Mammary epithelial cell (primary cell): ENCODE measurements at regions of chr2 and their contacts with region 1.

Region 1: DNA sequence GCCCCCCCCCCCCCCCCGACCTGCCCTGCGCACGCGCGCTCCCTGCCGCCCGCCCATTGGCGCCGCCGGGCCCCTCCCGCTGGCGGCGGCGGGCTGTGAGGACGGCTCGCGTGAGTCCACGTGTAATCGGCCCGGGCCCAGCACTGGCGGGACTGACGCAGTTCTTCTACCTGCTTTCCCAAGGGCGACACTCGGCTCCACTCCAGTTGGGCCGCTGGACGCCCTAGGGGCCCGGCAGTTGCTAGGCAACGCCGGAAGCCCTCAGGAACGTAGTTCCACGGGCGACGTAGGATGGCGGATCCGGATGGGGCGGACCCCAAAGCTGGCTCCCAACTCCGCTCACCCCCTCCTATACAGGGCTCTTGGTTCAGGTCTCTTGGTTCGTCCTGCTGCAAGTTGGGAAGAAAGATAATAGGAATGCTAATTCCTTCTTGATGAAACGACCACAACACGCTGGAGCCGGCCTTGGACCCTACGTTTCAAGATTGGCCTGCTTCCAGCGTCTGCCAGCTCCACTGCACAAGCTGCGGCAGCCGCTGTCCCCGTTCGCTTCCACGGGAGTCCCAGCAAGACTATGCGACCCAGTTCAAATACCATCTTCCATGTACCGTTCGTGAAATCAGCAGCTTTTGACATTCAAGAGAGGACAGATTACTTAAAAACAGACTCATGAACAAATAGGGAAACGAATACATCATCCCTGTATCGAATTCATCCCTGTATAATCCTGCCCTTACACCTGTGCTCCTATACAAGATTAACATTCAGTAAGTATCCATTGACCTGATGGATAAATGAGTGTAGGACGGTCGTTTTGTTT is 415 bp upstream of the MCFD2 start:
- DNase-seq: peak; percentile 87
- H3K4me3 ChIP-seq: peak overlapping the region; percentile 67 to 97 (median 74)
- H3K27ac ChIP-seq: peak overlapping the region; percentile 92
- H3K4me1 ChIP-seq: peaks cover 26% of the 10 kb centered on the region
- H3K27me3 ChIP-seq: no peaks in the 10 kb centered on the region
- CTCF ChIP-seq: no peak

Region 2: DNA sequence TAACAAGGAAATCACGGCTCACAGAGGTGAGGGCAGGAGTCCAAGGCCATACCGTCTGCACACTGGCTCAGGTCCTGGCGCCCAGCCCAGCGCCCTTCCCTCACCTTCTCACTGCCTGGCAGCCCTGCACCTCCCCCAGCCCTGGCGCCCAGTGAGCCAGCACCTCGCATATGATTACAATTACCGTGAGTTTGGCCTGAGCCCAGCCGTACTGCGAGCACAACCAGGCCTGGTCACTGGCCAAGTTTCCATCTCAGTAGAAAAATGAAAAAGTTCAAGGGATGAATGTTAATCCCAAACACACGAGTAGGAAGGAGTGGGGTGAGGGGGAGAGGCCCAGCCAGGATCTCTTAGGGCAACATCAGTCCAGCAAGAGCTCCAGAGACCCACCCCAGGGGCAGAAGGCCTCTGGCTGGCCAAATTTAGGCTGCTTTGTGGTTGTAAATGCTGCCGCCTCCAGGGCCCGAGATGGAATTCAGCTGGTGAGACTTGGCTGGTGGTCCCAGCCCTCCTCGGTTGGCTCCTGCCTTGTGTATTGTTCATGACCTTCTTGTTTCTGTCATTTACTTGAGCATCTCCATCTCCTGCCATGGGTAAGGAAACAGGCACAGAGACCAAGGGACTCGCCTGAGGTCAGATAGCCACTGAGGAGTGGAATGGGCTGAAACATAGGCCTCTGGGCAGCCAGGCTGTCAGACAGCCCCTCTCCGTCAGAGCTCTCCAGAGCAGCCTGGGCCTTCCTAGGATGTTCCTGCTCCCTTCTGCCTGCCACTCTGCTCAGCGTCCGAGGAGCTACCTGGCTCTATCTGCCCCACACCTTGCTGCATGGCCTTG is 68.6 kb before region 1 on chr2:
- CTCF ChIA-PET with region 1: no interaction called
- dilution Hi-C with region 1: no loop called
- in situ Hi-C with region 1: no loop called
- intact Hi-C with region 1: no loop called
- DNase-seq: peak; percentile 85
- H3K4me3 ChIP-seq: no peak overlapping the region
- H3K27ac ChIP-seq: peak overlapping the region; percentile 58
- H3K4me1 ChIP-seq: peaks cover 64% of the 10 kb centered on the region
- H3K27me3 ChIP-seq: no peaks in the 10 kb centered on the region
- CTCF ChIP-seq: no peak

Region 3: DNA sequence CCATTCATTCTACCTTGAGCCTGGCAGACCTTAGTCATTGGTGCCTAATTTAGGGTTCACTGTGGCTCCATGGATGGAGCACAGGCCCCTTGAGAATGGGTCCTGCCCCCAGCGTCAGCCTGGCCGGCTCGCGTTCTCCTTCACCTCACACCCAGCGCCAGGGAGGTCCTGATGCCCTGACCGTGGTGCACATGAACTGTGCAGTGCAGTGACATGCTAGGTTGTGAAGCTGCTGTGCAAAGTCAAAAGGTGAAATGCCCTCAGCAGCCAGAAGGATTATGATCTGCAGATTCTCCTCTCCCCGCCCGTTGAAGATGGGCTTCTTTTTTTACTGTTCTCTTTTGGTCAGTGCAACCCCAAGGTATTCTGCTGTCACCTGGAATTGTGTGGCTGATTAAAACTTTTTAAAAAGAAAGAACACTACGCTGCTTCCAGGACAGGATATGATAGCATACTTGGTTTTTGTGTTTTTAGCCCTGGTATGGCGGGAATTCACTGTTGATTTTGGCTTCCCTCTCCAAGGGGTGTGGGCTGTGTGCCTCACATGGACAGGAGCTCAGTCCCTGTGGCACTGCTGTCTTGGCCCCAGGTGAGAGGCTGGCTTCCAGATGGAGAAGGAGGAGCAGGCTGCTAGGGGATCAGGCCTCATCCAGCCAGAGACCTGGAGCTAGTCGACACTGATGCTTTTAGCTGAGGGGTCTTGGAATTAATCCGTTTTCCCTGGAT is 49.0 kb after region 1 on chr2:
- CTCF ChIA-PET with region 1: no interaction called
- dilution Hi-C with region 1: loop called (anchors 5 kb)
- in situ Hi-C with region 1: no loop called
- intact Hi-C with region 1: loop called (anchors 1 kb)
- DNase-seq: peak; percentile 65
- H3K4me3 ChIP-seq: no peak overlapping the region
- H3K27ac ChIP-seq: peak overlapping the region; percentile 41
- H3K4me1 ChIP-seq: peaks cover 53% of the 10 kb centered on the region
- H3K27me3 ChIP-seq: no peaks in the 10 kb centered on the region
- CTCF ChIP-seq: no peak

Region 4: GRCh38 chr2:46970334-46971288 is 54.6 kb after region 1 on chr2:
- CTCF ChIA-PET with region 1: no interaction called
- dilution Hi-C with region 1: no loop called
- in situ Hi-C with region 1: no loop called
- intact Hi-C with region 1: loop called (anchors 1 kb)
- DNase-seq: peak; percentile 89
- H3K4me3 ChIP-seq: no peak overlapping the region
- H3K27ac ChIP-seq: peak overlapping the region; percentile 51
- H3K4me1 ChIP-seq: peaks cover 48% of the 10 kb centered on the region
- H3K27me3 ChIP-seq: no peaks in the 10 kb centered on the region
- CTCF ChIP-seq: no peak